ENCODE measurements at regions of chr5 and their contacts with region 1.

Region 1: GRCh38 chr5:40688127-40688761 is 8.5 kb downstream of the PTGER4 start:
- DNase-seq: peak; percentile 74
- ATAC-seq: peak; percentile 92 to 95
- H3K4me3 ChIP-seq: peak overlapping the region; percentile 82
- H3K27ac ChIP-seq: peak overlapping the region; percentile 3
- H3K4me1 ChIP-seq: peaks cover 48% of the 10 kb centered on the region
- H3K27me3 ChIP-seq: no peaks in the 10 kb centered on the region
- CTCF ChIP-seq: peak; percentile 89

Region 2: DNA sequence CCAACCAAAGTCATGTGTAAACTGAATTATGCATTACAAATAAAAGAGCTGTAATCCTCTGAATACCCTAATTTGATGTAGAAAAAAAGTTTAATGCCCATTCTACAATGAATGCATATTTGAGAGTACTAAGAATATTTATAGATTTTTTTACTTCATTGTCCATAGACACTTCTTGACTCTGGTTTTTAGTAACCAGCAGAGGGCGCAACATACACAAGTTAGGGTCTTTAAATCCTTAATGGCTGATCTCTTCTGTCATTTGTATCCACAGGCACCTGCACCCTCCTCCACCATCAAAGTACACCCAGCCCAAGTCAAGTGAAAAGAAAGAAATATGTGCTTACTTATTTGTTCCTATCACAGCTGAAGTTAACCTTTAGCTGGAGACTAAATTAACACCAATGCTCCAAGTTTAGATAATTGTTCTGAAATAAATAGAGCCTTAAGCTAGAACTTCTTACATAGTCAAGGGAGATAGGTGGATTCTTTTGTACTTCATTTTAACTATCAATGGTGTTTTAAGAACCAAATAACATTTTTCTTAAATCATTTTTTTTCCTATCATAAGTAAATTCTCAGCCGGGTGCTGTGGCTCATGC is 739.3 kb before region 1 on chr5:
- intact Hi-C with region 1: loop called (anchors 5 kb)
- DNase-seq: no peak
- ATAC-seq: peak; percentile 80 to 89
- H3K4me3 ChIP-seq: no peak overlapping the region
- H3K27ac ChIP-seq: no peak overlapping the region
- H3K4me1 ChIP-seq: peaks cover 3% of the 10 kb centered on the region
- H3K27me3 ChIP-seq: no peaks in the 10 kb centered on the region
- CTCF ChIP-seq: peak; percentile 73

Region 3: DNA sequence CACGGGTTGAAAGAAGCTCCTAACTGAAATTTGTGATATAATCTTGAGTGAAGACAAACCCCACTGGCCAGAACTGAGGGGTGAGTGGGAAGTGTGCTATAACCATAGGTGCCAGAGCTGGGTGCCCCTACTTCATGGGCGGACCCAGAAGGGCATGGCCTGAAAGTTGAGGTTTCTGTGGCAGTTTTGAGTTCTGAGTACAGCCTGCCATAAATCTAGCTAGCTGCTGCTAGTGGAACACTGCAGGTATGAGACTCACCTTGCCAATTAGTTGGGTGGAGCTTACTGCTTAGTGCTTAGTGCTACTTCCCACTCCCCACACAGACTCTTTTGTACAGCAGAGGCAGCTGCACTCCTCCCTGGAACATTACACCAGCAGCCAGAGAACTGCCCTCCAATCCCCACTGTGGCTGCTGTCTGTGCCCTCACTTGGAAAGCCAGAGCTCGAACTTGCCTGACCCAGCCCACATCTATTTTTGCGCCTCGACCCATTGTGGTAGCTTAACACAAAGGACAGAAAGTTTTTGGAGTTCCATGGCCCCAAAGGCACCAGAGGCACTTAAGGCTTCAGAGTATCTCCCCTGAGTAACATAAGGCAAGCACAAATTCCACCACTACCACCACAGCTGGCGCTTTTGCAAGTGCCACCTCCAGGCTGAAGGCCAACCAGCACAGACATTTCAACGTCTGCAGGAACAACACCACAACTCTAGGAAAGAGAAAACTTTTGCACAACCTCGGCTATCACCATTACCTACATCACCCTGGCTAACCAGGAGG is 35.6 kb before region 1 on chr5:
- intact Hi-C with region 1: no loop called
- DNase-seq: no peak
- ATAC-seq: no peak
- H3K4me3 ChIP-seq: no peak overlapping the region
- H3K27ac ChIP-seq: no peak overlapping the region
- H3K4me1 ChIP-seq: no peaks in the 10 kb centered on the region
- H3K27me3 ChIP-seq: no peaks in the 10 kb centered on the region
- CTCF ChIP-seq: no peak

Region 4: DNA sequence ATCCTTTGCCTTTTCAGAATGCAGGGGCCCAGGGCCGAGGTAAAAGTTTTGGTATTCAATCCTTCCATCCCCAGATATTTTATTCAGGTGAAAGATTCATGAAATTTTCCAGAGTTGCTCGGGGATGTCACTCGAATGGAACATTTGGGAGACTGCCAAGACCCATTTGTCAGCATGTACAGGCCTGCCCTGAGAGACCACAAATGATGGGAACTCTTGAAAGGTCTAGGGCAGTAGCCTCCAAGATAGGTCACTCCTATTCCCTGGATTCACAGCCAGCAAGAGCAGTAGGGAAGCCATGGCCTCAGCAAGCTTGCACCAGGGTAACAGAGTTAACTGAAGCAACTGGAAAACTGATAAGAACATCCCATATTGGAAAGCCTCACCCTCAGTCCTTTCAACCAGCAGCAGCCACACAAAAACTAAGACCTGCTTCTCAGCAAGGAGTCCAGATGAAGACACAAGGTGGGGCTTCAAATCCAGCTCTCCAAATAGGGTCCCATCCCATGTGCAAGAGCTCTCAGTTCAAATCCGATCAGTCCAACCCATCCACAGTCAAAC is 165.5 kb after region 1 on chr5:
- intact Hi-C with region 1: no loop called
- DNase-seq: no peak
- ATAC-seq: no peak
- H3K4me3 ChIP-seq: no peak overlapping the region
- H3K27ac ChIP-seq: no peak overlapping the region
- H3K4me1 ChIP-seq: no peaks in the 10 kb centered on the region
- H3K27me3 ChIP-seq: no peaks in the 10 kb centered on the region
- CTCF ChIP-seq: no peak

Region 5: DNA sequence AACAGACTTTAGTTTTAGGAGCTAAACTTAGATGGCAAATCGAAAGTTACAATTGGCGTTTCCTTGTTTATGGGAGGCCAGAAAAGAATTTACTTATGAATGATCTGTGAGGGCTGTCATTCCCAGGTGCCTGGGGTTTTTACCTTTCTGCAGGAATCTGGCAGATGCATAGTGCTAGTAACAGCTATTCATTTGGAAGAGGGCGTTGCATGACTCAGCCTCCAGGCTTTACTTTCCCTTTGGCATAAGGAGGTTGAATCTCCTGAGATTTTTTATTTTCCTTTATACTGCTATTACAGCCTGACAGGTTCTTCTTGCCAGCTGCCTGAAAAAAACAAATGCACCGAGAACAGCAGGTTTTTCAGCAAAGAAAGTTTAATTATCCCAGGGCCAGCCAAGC is 182.9 kb after region 1 on chr5:
- intact Hi-C with region 1: no loop called
- DNase-seq: no peak
- ATAC-seq: no peak
- H3K4me3 ChIP-seq: no peak overlapping the region
- H3K27ac ChIP-seq: no peak overlapping the region
- H3K4me1 ChIP-seq: no peaks in the 10 kb centered on the region
- H3K27me3 ChIP-seq: no peaks in the 10 kb centered on the region
- CTCF ChIP-seq: no peak

Region 6: DNA sequence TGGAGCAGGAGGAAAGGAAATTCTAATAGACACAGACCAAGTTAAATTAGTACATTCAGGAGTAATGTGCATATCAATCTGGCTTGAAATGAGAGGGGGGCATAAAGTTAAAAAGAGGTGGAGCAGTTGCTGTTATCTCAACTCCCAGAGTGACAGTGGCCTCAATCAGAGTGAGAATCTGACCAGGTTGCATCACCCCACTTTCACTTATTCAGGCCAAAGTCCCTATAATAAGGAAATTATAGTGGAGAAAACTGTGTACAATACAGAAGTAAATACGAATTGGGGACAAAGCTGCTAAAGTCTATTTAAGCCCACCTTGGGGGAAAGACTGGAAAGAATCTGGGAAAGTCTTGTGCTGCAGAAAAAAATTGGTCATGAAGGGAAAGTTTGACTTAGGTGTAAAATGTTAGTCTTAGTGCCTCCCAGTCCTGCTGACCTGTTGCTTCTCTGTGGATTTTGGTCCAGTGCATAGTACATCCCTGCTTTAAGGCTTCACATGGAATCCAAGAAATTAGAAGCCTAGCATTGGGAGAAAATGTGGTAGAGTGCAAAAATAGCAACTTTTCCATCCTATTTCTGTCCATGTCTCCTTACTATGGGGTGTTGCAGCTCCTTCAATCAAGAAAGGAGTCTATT is 355.0 kb after region 1 on chr5:
- intact Hi-C with region 1: no loop called
- DNase-seq: no peak
- ATAC-seq: no peak
- H3K4me3 ChIP-seq: no peak overlapping the region
- H3K27ac ChIP-seq: no peak overlapping the region
- H3K4me1 ChIP-seq: no peaks in the 10 kb centered on the region
- H3K27me3 ChIP-seq: no peaks in the 10 kb centered on the region
- CTCF ChIP-seq: no peak